GM10248 (cell line): ENCODE measurements at regions of chr12 and their contacts with region 1.

Region 1: GRCh38 chr12:22459838-22460490 is 84.4 kb downstream of the C2CD5 start:
- DNase-seq: peak; percentile 17
- CTCF ChIP-seq: peak; percentile 56

Region 2: GRCh38 chr12:22443379-22444316 is 16.3 kb before region 1 on chr12:
- CTCF ChIA-PET with region 1: interaction called, 28 read pairs
- POLR2A ChIA-PET with region 1: no interaction called
- DNase-seq: peak; percentile 62
- CTCF ChIP-seq: peak; percentile 80

Region 3: DNA sequence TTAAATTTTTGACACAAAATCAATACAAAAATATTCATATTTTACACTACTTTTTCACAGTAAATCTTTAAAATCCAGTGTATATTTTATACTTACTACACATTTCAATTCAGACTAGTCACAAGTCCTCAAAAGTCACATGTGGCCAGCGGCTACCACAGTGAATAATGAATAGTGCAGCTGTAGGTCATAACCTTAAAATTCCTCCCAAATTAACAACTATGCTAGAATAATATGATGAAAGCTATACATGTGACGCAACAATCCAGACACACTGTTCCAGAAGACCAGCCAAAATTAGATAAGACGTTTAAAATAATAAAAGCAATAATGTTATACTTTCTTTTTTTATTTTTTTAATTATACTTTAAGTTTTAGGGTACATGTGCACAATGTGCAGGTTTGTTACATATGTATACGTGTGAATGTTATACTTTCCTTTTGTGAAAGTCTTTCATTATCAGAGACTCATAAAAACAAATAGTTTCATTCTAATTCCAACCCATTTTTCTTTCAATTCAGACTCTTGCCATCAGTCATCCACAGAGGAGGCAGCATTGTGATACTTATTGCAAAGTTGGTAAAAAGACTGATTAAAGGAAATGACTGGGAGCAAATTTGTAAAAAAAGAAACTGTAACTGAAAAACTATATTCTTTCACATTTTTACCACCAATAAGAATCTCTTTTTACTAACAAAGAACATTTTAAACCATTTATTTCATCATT is 17.4 kb after region 1 on chr12:
- CTCF ChIA-PET with region 1: interaction called, 10 read pairs
- POLR2A ChIA-PET with region 1: no interaction called
- DNase-seq: no peak
- CTCF ChIP-seq: no peak

Region 4: DNA sequence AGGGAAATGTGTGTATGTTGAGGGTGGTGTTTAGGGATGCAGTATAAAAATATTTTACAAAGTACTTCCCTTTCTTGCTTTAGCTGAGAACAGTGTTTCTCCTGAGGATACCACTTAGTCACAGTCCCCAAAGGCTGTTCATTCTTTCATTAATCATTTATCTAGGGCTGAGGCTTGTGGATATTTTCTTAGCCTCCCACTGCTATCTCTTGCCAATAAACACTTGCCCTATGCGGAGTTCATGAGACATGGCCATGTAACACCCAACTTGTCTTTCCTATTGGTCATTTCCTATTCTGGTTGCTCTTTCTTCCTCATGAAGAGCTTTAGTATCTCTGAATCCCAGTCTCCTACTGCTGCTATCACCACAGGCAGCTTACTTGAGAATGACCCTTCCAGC is 240.1 kb after region 1 on chr12:
- CTCF ChIA-PET with region 1: no interaction called
- POLR2A ChIA-PET with region 1: no interaction called
- DNase-seq: no peak
- CTCF ChIP-seq: no peak